ENCODE measurements at regions of chr14 and their contacts with region 1.

Region 1: DNA sequence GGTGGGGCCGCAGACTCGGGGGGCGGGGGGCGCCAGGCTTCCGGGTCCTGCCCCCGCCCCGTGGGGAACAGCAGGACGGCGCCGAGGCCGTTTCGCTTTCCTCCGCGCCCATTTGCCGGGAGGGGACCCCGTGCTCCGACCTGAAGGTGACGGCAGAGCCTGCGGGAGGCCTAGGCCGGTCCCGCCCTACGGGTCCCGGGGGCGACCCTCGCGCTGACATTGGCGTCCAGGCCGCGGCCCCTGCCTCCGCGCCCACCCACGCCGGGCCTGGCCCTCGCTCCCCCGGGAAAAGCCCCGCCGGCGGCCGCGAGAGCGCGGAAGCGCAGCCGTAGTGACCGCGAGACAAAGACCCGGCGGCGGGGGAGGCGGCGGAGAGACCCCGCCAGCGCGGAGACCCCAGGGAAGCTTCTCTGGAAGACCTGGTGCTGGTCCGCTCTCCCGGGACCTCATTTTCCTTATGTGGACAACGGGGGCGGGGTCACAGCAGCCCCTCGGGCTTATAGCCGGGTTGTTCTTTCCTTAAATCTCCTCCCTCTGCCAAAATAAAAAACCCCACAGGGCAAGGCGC is 37.1 kb upstream of the RCOR1 start:
- DNase-seq: peak; percentile 61
- H3K4me3 Mint-ChIP-seq: peak overlapping the region; percentile 76
- H3K27ac Mint-ChIP-seq: peak overlapping the region; percentile 58
- H3K4me1 Mint-ChIP-seq: no peaks in the 10 kb centered on the region
- H3K27me3 Mint-ChIP-seq: no peaks in the 10 kb centered on the region

Region 2: GRCh38 chr14:102295270-102295669 is 260.1 kb before region 1 on chr14:
- intact Hi-C with region 1: no loop called
- DNase-seq: no peak
- H3K4me3 Mint-ChIP-seq: no peak overlapping the region
- H3K27ac Mint-ChIP-seq: no peak overlapping the region
- H3K4me1 Mint-ChIP-seq: no peaks in the 10 kb centered on the region
- H3K27me3 Mint-ChIP-seq: no peaks in the 10 kb centered on the region

Region 3: DNA sequence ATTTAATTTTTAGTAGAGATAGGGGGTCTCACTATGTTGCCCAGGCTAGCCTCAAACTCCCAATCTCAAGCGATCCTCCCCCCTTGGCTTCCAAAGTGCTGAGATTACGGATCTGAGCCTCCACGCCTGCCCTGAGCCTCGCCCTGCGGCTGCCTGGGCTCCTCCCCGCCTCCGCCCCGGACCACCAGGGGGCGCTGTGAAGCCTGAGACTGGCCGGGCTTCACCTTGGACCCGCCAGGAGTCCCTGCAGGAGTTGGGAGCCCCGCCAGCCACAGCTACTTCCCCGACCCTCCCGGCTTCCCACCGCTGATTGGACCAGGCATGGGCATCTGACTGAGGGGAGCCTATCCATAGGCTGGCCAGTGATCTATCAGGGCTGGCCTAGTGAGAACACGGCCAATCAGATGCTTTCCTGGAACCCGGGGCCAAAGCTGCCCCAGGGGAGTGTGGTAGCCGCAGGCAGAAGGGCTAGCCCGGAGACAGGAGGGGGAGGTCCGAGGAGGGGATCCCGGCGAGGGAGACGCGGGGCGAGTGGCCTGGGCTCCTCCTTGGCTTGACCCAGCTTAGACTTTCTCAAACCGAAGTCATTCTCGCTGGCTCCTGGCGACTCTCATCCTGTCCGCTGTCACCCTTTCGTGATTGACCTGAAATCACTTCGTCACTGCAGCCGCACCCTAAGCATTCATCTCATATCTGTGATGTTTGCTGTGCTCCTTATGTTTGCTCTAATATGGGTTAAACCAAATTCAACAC is 30.7 kb before region 1 on chr14:
- intact Hi-C with region 1: loop called (anchors 1 kb)
- DNase-seq: peak; percentile 94
- H3K4me3 Mint-ChIP-seq: peak overlapping the region; percentile 92
- H3K27ac Mint-ChIP-seq: peak overlapping the region; percentile 88
- H3K4me1 Mint-ChIP-seq: peaks cover 27% of the 10 kb centered on the region
- H3K27me3 Mint-ChIP-seq: peaks cover 7% of the 10 kb centered on the region

Region 4: GRCh38 chr14:102568114-102568621 is 12.8 kb after region 1 on chr14:
- intact Hi-C with region 1: loop called (anchors 1 kb)
- DNase-seq: peak; percentile 64
- H3K4me3 Mint-ChIP-seq: peak overlapping the region; percentile 43
- H3K27ac Mint-ChIP-seq: peak overlapping the region; percentile 93
- H3K4me1 Mint-ChIP-seq: peaks cover 11% of the 10 kb centered on the region
- H3K27me3 Mint-ChIP-seq: no peaks in the 10 kb centered on the region